ENCODE measurements at regions of chr10 and their contacts with region 1.

Region 1: GRCh38 chr10:28580825-28581224 is 47.9 kb downstream of the WAC start:
- H3K4me3 Mint-ChIP-seq: no peak overlapping the region
- H3K27ac Mint-ChIP-seq: no peak overlapping the region
- H3K4me1 Mint-ChIP-seq: peaks cover 58% of the 10 kb centered on the region
- H3K27me3 Mint-ChIP-seq: no peaks in the 10 kb centered on the region

Region 2: DNA sequence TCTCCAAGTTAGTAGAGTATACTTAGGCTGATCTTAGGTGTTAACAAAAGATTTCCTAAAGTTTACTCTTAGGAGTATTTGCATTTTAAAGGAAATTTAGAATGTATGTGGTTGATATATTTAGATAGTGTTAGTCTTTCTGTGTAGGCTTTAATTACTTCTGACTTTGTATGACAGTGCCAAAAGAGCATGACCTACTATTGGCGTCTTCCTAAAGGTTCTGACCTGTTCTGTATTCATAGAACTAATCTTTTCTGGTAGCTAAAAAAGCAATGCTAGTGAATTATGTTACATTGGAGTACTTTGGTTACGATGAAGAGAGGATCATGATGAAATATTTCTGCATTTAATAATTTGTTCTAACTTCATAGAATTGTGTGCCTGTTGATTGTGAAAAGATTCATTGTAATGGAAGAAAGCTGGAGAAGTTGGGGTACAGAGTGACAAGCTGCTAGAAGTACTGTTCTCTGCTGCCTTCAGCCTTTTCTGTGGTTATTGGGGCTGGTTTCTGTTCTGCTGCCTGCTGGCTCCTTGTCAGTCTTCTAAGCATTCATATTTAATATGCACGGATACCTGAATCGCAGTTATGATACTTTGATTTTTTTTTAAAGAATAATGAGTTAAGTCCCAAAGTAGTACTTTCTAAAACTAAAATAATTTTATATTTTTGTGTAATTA is 34.7 kb before region 1 on chr10:
- intact Hi-C with region 1: loop called (anchors 5 kb)
- H3K4me3 Mint-ChIP-seq: no peak overlapping the region
- H3K27ac Mint-ChIP-seq: no peak overlapping the region
- H3K4me1 Mint-ChIP-seq: peaks cover 43% of the 10 kb centered on the region
- H3K27me3 Mint-ChIP-seq: no peaks in the 10 kb centered on the region